Activated naive CD4-positive, alpha-beta T cell treated with anti-CD3 and anti-CD28 coated beads, Interleukin-2, amount 10 ng/mL, durations not matched to agents 7 days and 5 days (primary cell): ENCODE measurements at regions of chr16 and their contacts with region 1.

Region 1: DNA sequence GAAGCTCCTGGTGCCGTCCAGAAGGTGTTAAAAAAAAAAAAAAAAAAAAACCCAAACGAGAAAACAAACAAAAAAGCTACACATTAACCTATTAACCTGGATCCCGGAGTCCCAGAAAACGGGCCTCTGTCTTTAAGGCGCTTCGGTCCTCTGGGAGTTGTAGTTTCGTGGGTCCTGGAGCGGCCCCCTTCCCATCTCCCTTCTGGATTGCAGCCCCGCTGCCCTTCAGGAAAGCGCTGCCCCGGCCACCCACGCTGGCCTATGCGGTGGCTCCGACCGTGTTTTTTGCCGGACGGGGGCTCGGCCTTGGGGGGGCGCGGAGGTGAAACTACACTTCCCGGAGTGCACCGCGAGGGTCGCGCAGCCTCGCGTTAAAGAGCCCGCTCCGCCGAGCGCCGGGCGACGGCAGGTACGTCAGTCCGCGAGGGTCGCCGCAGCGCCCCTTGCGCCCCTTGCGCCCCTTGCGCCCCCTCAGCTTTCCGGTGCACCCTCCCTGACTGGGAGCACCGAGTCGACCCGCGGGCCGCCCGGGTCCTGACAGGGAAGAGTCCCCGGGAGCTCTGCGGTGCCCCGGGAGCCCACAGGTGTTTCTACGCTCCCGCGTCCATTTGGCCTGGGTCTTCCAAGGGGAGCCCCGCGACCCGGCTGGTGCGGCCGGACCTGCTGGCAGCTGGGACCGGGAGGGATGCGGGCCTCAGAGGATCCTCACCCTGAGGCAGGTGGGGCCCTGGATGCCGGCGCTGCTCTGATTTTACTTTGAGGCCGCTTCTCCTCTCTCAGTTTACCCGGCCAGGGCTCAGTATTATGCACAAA is at the start of gene FCSK:
- DNase-seq: peak; percentile 74
- H3K4me3 Mint-ChIP-seq: peak within 1 kb of the TSS; percentile 91
- H3K27ac Mint-ChIP-seq: peak within 1 kb of the TSS; percentile 87
- H3K4me1 Mint-ChIP-seq: peaks cover 32% of the 10 kb centered on the region
- H3K27me3 Mint-ChIP-seq: peaks cover 5% of the 10 kb centered on the region

Region 2: DNA sequence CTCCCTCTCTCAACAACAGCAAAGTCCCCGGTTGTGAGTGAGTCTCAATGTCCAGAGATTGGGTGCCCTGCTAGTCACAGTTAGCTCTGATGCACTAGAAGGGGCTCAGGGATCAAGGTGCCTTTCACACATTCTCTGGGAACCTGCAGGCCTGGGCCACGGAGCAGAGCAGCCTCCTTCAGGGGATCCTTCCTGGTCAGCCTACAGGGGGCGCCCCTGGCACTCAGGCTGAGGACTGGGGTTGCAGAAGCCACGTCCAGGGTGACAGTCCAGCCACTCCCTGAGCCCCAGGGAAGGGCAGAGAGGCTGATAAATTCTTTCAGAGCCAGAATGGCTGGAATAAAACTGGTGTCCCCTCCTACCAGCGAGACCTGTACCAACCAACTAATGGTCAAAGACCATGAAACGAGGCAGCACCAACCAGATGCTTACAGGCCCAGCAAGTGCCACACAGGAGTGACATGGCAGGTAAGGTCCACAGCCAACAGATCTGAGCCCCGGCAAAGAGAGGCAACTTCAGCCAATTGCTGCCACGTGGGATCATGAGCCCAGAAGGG is 59.0 kb before region 1 on chr16:
- CTCF ChIA-PET with region 1: interaction called, 14 read pairs
- DNase-seq: peak; percentile 71
- H3K4me3 Mint-ChIP-seq: no peak overlapping the region
- H3K27ac Mint-ChIP-seq: peak overlapping the region; percentile 38
- H3K4me1 Mint-ChIP-seq: no peaks in the 10 kb centered on the region
- H3K27me3 Mint-ChIP-seq: no peaks in the 10 kb centered on the region